Kidney (tissue), 22 donors: ENCODE measurements at regions of chr11 and their contacts with region 1.

Region 1: DNA sequence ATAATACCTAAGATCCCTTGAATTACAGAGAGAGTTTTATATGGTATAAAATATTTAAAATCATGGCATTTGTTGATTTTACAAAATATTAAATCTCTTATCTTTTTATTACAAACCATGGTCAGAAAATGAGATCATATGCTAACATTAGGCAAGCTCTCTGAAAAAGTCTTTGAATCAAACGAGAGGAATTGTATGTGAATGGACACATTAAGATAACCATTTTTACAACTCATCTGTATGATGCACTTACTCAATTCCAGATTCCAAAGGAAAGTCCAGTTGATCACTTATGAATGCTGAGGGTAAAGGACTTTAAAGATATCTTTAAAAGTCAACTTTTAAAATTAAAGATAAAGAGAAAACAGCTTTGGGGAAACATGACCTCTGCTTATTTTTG is 83.5 kb upstream of the LUZP2 start:
- DNase-seq: no peak
- H3K4me3 ChIP-seq: no peak overlapping the region
- H3K27ac ChIP-seq: no peak overlapping the region
- H3K4me1 ChIP-seq: no peaks in the 10 kb centered on the region
- H3K27me3 ChIP-seq: no peaks in the 10 kb centered on the region
- CTCF ChIP-seq: no peak

Region 2: GRCh38 chr11:24271798-24272197 is 141.6 kb before region 1 on chr11:
- intact Hi-C with region 1: no loop called
- DNase-seq: no peak
- H3K4me3 ChIP-seq: no peak overlapping the region
- H3K27ac ChIP-seq: no peak overlapping the region
- H3K4me1 ChIP-seq: no peaks in the 10 kb centered on the region
- H3K27me3 ChIP-seq: no peaks in the 10 kb centered on the region
- CTCF ChIP-seq: no peak

Region 3: DNA sequence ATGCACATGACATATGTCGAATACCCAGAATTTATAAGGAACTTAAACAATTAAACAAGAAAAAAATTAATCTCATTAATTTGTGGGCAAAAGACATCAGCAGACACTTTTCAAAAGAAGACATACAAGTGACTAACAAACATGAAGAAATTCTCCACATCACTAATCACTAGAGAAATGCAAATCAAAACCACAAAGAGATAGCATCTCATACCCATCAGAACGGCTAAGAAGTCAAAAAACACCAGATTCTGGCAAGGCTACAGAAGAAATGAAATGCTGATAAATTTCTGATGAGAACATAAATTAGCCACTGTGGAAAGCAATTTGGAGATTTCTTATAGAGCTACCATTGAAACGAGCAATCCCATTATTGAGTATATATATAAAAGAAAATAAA is 127.2 kb before region 1 on chr11:
- intact Hi-C with region 1: no loop called
- DNase-seq: no peak
- H3K4me3 ChIP-seq: no peak overlapping the region
- H3K27ac ChIP-seq: no peak overlapping the region
- H3K4me1 ChIP-seq: no peaks in the 10 kb centered on the region
- H3K27me3 ChIP-seq: no peaks in the 10 kb centered on the region
- CTCF ChIP-seq: no peak

Region 4: DNA sequence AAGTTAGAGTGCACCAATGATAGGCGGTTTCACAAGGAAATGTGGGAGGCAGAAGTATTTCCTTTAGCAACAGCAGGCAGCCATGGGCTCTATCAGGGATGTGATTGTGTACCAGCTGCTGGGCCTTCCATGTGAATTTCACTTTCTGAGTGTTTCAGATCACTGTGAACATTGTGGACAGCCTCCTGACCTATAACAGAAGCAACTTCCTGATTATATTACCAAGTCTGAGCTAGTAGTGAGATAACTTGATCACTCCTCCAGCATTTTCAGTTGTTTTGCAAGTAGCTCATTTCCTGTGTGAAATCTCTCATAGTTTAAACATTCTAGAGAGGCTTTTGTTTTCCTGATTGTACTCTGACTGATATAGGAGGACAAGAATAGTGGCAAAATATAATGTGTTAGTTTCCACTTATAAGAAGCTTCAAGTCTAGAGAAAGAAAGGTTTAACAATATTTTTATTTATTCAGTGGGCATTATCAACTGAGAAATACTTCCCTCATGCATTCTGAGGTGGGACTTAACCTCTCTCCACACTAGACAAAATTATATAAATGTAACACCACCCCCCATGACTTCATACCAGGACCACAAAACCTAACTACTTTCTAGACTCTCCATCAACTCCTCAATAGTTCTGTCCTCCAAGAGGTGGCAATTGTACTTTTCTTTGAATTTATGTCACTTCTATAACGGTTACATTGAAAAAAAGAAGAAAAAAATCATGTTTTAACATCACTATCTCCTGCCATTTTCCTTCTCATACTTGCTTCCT is 100.7 kb before region 1 on chr11:
- intact Hi-C with region 1: no loop called
- DNase-seq: no peak
- H3K4me3 ChIP-seq: no peak overlapping the region
- H3K27ac ChIP-seq: no peak overlapping the region
- H3K4me1 ChIP-seq: no peaks in the 10 kb centered on the region
- H3K27me3 ChIP-seq: no peaks in the 10 kb centered on the region
- CTCF ChIP-seq: no peak

Region 5: GRCh38 chr11:24348908-24349307 is 64.5 kb before region 1 on chr11:
- intact Hi-C with region 1: loop called (anchors 10 kb)
- DNase-seq: no peak
- H3K4me3 ChIP-seq: no peak overlapping the region
- H3K27ac ChIP-seq: no peak overlapping the region
- H3K4me1 ChIP-seq: no peaks in the 10 kb centered on the region
- H3K27me3 ChIP-seq: no peaks in the 10 kb centered on the region
- CTCF ChIP-seq: no peak